ENCODE measurements at regions of chr12 and their contacts with region 1.

Region 1: DNA sequence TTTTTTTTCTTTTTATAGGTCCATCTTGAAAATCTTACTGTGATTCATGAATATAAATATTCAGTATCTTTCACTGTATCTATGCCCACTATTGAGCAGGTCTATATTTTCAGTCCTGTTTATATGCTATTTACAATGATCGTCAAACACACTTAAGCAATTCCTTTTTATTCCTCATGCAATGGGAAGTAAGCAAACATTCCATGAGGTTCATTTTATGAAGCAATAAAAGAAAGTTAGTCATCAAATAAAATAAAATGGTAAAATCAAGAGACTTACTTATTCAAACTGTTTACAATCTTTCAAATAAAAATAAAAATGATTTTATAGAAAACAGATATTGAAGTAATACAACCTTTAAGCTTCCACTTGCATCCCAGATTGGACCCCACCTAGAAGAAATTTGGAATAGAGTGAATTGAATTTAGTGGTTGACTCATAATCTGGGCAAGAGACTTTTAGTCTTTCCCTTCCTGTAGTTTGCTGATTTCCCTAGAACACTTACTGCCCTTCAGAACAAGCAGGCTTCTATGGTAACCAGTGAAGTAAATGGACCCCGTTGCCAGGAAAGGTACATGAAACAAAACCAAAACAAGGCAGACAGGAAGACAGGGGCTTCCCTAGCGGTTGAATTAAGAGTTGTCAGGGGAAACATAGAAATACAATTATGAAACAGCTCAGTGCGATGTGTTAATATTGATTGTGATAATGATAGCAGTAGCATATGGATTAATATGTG is 241.0 kb upstream of the ATP2B1 start:
- DNase-seq: peak; percentile 23 to 92
- ATAC-seq: peak; percentile 88 to 96 (median 96)
- H3K4me3 ChIP-seq: no peak overlapping the region
- H3K4me3 Mint-ChIP-seq: peak overlapping the region; percentile 22
- H3K27ac ChIP-seq: peak overlapping the region; percentile 28
- H3K27ac Mint-ChIP-seq: peak overlapping the region; percentile 75 to 89
- H3K4me1 ChIP-seq: peaks cover 7% of the 10 kb centered on the region
- H3K4me1 Mint-ChIP-seq: peaks cover 25 to 27% of the 10 kb centered on the region in 2 donors
- H3K27me3 ChIP-seq: no peaks in the 10 kb centered on the region
- H3K27me3 Mint-ChIP-seq: no peaks in the 10 kb centered on the region
- CTCF ChIP-seq: peak; percentile 35

Region 2: GRCh38 chr12:89756585-89757321 is 192.9 kb before region 1 on chr12:
- intact Hi-C with region 1: loop called (anchors 2 kb)
- DNase-seq: peak in 1 of 2 donors; percentile 67
- ATAC-seq: peak; percentile 77 to 88 (median 79)
- H3K4me3 ChIP-seq: no peak overlapping the region
- H3K4me3 Mint-ChIP-seq: peak overlapping the region; percentile 18
- H3K27ac ChIP-seq: peak overlapping the region; percentile 72
- H3K27ac Mint-ChIP-seq: peak overlapping the region; percentile 80 to 88
- H3K4me1 ChIP-seq: peaks cover 10% of the 10 kb centered on the region
- H3K4me1 Mint-ChIP-seq: peaks cover 54 to 55% of the 10 kb centered on the region in 2 donors
- H3K27me3 ChIP-seq: no peaks in the 10 kb centered on the region
- H3K27me3 Mint-ChIP-seq: no peaks in the 10 kb centered on the region
- CTCF ChIP-seq: no peak

Region 3: GRCh38 chr12:89862511-89863179 is 87.0 kb before region 1 on chr12:
- intact Hi-C with region 1: loop called (anchors 1 kb)
- DNase-seq: peak; percentile 23 to 81
- ATAC-seq: peak; percentile 52 to 79 (median 54)
- H3K4me3 ChIP-seq: peak overlapping the region; percentile 34
- H3K4me3 Mint-ChIP-seq: peak overlapping the region; percentile 86
- H3K27ac ChIP-seq: peak overlapping the region; percentile 97
- H3K27ac Mint-ChIP-seq: peak overlapping the region; percentile 94 to 96
- H3K4me1 ChIP-seq: peaks cover 16% of the 10 kb centered on the region
- H3K4me1 Mint-ChIP-seq: peaks cover 30 to 42% of the 10 kb centered on the region in 2 donors
- H3K27me3 ChIP-seq: no peaks in the 10 kb centered on the region
- H3K27me3 Mint-ChIP-seq: no peaks in the 10 kb centered on the region
- CTCF ChIP-seq: no peak

Region 4: DNA sequence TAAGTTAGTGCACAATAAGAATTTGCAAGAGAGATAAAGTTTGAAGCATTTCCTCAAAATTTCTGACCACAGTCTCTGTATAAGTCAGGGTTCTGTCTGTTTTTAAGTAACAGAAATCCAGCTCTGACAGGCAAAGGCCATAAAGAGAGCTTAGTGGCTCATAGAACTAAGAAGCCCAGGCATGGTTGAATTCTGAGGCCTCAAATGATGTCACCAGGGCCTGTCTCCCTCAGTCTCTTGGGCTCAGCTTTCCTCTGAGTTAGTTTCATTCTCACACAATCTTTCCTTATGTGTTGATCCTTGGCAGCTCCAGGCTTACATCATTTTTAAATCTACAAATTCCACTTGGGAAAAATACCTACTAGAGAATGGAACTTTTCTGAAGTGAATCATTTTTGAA is 67.6 kb before region 1 on chr12:
- intact Hi-C with region 1: loop called (anchors 2 kb)
- DNase-seq: peak in 1 of 2 donors; percentile 44
- ATAC-seq: no peak
- H3K4me3 ChIP-seq: no peak overlapping the region
- H3K4me3 Mint-ChIP-seq: peak overlapping the region; percentile 25
- H3K27ac ChIP-seq: peak overlapping the region; percentile 82
- H3K27ac Mint-ChIP-seq: peak overlapping the region; percentile 96
- H3K4me1 ChIP-seq: peaks cover 16% of the 10 kb centered on the region
- H3K4me1 Mint-ChIP-seq: peaks cover 33 to 45% of the 10 kb centered on the region in 2 donors
- H3K27me3 ChIP-seq: no peaks in the 10 kb centered on the region
- H3K27me3 Mint-ChIP-seq: peaks cover 0 to 2% of the 10 kb centered on the region in 2 donors
- CTCF ChIP-seq: no peak

Measured in natural killer cell (primary cell).